Activated naive CD4-positive, alpha-beta T cell treated with anti-CD3 and anti-CD28 coated beads for 36 hours (primary cell): ENCODE measurements at regions of chr14 and their contacts with region 1.

Region 1: GRCh38 chr14:61403411-61403810 is 82.0 kb downstream of the PRKCH start:
- DNase-seq: no peak
- H3K4me3 Mint-ChIP-seq: peak overlapping the region; percentile 63
- H3K27ac Mint-ChIP-seq: peak overlapping the region; percentile 91
- H3K4me1 Mint-ChIP-seq: peaks cover 86% of the 10 kb centered on the region
- H3K27me3 Mint-ChIP-seq: no peaks in the 10 kb centered on the region

Region 2: DNA sequence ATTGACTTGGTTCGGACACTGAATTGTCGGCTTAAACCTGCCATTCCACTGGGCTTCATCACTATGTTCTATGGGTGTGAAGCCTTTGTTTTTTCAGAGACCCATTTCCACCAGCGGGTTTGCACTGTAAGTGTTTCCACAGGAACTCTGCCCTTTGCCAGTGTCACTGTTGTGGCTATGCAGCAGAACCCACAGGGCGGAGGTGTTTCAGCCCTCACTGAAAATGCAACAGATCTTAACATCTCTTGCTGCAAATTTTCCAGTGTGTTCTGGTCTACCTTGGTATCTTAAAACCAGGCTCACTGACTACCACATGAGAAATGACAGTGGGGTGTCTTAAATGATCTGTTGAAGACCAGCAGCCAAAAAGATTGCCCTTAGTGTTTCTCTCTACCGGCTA is 60.9 kb before region 1 on chr14:
- CTCF ChIA-PET with region 1: no interaction called
- intact Hi-C with region 1: loop called (anchors 2 kb)
- DNase-seq: peak; percentile 86
- H3K4me3 Mint-ChIP-seq: peak overlapping the region; percentile 66
- H3K27ac Mint-ChIP-seq: peak overlapping the region; percentile 97
- H3K4me1 Mint-ChIP-seq: peaks cover 96% of the 10 kb centered on the region
- H3K27me3 Mint-ChIP-seq: no peaks in the 10 kb centered on the region

Region 3: DNA sequence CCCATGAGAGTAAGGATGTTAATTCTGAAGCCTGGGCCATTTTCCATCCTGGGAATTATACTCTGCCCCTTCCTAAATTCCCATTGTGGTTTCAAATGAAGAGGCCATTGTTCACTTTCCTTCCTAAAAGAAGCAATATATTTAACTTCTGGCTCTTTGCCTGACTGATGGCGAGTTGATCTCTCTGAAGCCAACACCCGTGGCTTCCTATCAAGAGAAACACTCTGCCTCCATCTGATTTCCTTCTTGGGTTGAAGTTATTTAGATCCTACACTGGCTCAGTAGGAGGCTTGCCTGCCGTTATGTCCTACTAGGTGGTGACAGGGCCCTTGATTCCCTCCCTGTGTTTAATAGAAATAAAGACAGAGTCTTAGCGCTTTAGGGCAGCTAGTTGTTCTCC is 15.3 kb after region 1 on chr14:
- CTCF ChIA-PET with region 1: interaction called, 3 read pairs
- intact Hi-C with region 1: loop called (anchors 1 kb)
- DNase-seq: no peak
- H3K4me3 Mint-ChIP-seq: no peak overlapping the region
- H3K27ac Mint-ChIP-seq: peak overlapping the region; percentile 51
- H3K4me1 Mint-ChIP-seq: peaks cover 60% of the 10 kb centered on the region
- H3K27me3 Mint-ChIP-seq: no peaks in the 10 kb centered on the region

Region 4: GRCh38 chr14:61438860-61439684 is 35.7 kb after region 1 on chr14:
- CTCF ChIA-PET with region 1: interaction called, 7 read pairs
- intact Hi-C with region 1: loop called (anchors 1 kb)
- DNase-seq: peak; percentile 60
- H3K4me3 Mint-ChIP-seq: peak overlapping the region; percentile 63
- H3K27ac Mint-ChIP-seq: peak overlapping the region; percentile 84
- H3K4me1 Mint-ChIP-seq: peaks cover 93% of the 10 kb centered on the region
- H3K27me3 Mint-ChIP-seq: no peaks in the 10 kb centered on the region

Region 5: GRCh38 chr14:61573748-61574513 is 170.5 kb after region 1 on chr14:
- CTCF ChIA-PET with region 1: no interaction called
- intact Hi-C with region 1: no loop called
- DNase-seq: peak; percentile 65
- H3K4me3 Mint-ChIP-seq: no peak overlapping the region
- H3K27ac Mint-ChIP-seq: peak overlapping the region; percentile 74
- H3K4me1 Mint-ChIP-seq: peaks cover 78% of the 10 kb centered on the region
- H3K27me3 Mint-ChIP-seq: no peaks in the 10 kb centered on the region

Region 6: GRCh38 chr14:61609191-61609843 is 205.9 kb after region 1 on chr14:
- CTCF ChIA-PET with region 1: no interaction called
- intact Hi-C with region 1: no loop called
- DNase-seq: no peak
- H3K4me3 Mint-ChIP-seq: no peak overlapping the region
- H3K27ac Mint-ChIP-seq: no peak overlapping the region
- H3K4me1 Mint-ChIP-seq: peaks cover 4% of the 10 kb centered on the region
- H3K27me3 Mint-ChIP-seq: no peaks in the 10 kb centered on the region

Region 7: DNA sequence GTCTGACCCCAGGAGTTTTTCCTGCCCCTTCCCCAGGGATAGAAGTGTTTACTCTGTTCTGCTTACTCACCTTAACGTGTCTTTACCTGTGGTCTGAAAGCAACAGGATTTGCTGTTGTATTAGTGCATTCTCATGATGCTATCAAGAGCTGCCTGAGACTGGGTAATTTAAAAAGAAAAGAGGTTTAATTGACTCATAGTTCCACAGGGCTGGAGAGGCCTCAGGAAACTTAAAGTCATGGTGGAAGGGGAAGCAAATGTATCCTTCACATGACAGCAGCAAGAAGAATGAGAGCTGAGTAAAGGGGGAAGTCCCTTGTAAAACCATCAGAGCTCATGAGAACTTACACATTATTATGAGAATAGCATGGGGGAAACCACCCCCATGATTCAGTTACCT is 599.2 kb after region 1 on chr14:
- CTCF ChIA-PET with region 1: no interaction called
- intact Hi-C with region 1: no loop called
- DNase-seq: peak; percentile 47
- H3K4me3 Mint-ChIP-seq: no peak overlapping the region
- H3K27ac Mint-ChIP-seq: no peak overlapping the region
- H3K4me1 Mint-ChIP-seq: peaks cover 13% of the 10 kb centered on the region
- H3K27me3 Mint-ChIP-seq: peaks cover 17% of the 10 kb centered on the region